A549 (cell line): ENCODE measurements at regions of chr11 and their contacts with region 1.

Region 1: GRCh38 chr11:848380-848931 is 5.8 kb downstream of the TSPAN4 start:
- DNase-seq: peak in 1 of 2 experiments; percentile 72
- ATAC-seq: peak in 1 of 2 experiments; percentile 9; a peak in 2 of 6 replicates
- H3K4me3 ChIP-seq: no peak overlapping the region
- H3K27ac ChIP-seq: peak overlapping the region; percentile 37 to 99; a peak in 3 of 6 replicates
- H3K4me1 ChIP-seq: peaks cover 67% of the 10 kb centered on the region
- CTCF ChIP-seq: peak; percentile 64
- EP300 ChIP-seq: no peak
- POLR2A ChIP-seq: no peak
- RAD21 ChIP-seq: peak; percentile 72 to 78

Region 2: GRCh38 chr11:709109-709997 is 139.1 kb before region 1 on chr11:
- CTCF ChIA-PET with region 1: no interaction called
- POLR2A ChIA-PET with region 1: no interaction called
- DNase-seq: no peak
- ATAC-seq: no peak
- H3K4me3 ChIP-seq: no peak overlapping the region
- H3K27ac ChIP-seq: peak overlapping the region; percentile 91 to 99; a peak in 5 of 6 replicates
- H3K4me1 ChIP-seq: peaks cover 73% of the 10 kb centered on the region
- CTCF ChIP-seq: no peak
- EP300 ChIP-seq: no peak
- POLR2A ChIP-seq: no peak
- RAD21 ChIP-seq: no peak

Region 3: DNA sequence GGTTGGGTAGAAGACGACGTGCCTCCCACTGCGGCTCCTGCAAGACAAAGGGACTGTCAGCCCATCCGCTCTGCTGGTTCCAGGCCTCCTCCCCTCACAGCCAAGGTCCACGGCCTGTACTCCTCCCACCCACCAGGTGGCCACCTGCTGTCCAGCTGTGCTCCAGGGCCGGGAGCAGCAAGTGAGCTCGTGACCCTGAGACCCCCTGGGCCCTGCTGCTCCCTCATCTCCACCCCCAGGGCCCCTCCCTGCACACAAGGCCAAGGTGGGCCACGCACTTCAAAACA is 21.6 kb after region 1 on chr11:
- CTCF ChIA-PET with region 1: interaction called, 18 read pairs
- POLR2A ChIA-PET with region 1: interaction called, 6 read pairs
- DNase-seq: no peak
- ATAC-seq: peak; percentile 35 to 48; a peak in 5 of 6 replicates
- H3K4me3 ChIP-seq: no peak overlapping the region
- H3K27ac ChIP-seq: no peak overlapping the region
- H3K4me1 ChIP-seq: peaks cover 24% of the 10 kb centered on the region; the same call in 2 of the 3 replicates
- CTCF ChIP-seq: no peak; the same call in 1 of the 3 replicates
- EP300 ChIP-seq: no peak
- POLR2A ChIP-seq: no peak
- RAD21 ChIP-seq: no peak

Region 4: GRCh38 chr11:933142-933851 is 84.8 kb after region 1 on chr11:
- CTCF ChIA-PET with region 1: no interaction called
- POLR2A ChIA-PET with region 1: no interaction called
- DNase-seq: no peak
- ATAC-seq: no peak; a peak in 1 of 6 replicates
- H3K4me3 ChIP-seq: no peak overlapping the region
- H3K27ac ChIP-seq: no peak overlapping the region
- H3K4me1 ChIP-seq: peaks cover 24% of the 10 kb centered on the region; the same call in 1 of the 3 replicates
- CTCF ChIP-seq: no peak
- EP300 ChIP-seq: no peak
- POLR2A ChIP-seq: no peak
- RAD21 ChIP-seq: no peak

Region 5: GRCh38 chr11:961921-962320 is 113.5 kb after region 1 on chr11:
- CTCF ChIA-PET with region 1: no interaction called
- POLR2A ChIA-PET with region 1: no interaction called
- DNase-seq: no peak
- ATAC-seq: no peak
- H3K4me3 ChIP-seq: no peak overlapping the region
- H3K27ac ChIP-seq: no peak overlapping the region
- H3K4me1 ChIP-seq: peaks cover 6% of the 10 kb centered on the region; the same call in 1 of the 3 replicates
- CTCF ChIP-seq: no peak
- EP300 ChIP-seq: no peak
- POLR2A ChIP-seq: no peak
- RAD21 ChIP-seq: no peak

Region 6: DNA sequence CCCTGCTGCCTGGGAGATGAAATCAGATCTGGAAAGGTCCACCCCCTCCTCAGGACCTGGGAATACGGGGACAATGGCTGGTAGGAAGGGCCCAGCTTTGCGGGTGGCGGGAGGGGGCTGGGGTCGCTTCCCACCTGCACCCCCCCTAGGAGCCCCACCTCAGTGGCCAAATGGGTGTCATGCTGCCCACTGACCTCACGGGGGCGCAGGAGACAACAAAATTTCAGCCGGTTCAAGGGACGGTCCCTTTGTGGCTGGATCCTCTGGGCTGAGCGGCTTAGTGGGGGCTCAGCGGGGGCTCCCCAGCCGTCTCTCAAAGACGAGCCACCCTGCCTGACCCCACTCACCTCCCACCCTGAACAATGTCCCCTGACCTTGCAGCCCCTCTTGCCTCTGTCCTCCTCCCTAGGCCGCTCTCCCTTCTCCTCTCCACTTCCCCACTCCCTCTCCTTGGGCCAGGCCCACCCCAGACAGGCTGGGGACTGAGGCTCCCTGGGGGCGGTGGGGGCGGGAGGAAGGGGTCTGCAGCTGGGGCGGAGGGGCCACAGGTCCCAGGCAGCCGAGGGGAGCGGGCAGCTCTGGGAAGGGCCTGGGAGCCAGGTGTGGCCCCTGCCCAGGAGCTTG is 1188.5 kb after region 1 on chr11:
- CTCF ChIA-PET with region 1: no interaction called
- POLR2A ChIA-PET with region 1: no interaction called
- DNase-seq: no peak
- ATAC-seq: peak; percentile 44 to 85; a peak in 3 of 6 replicates
- H3K4me3 ChIP-seq: no peak overlapping the region
- H3K27ac ChIP-seq: no peak overlapping the region
- H3K4me1 ChIP-seq: no peaks in the 10 kb centered on the region
- CTCF ChIP-seq: no peak
- EP300 ChIP-seq: no peak
- POLR2A ChIP-seq: no peak
- RAD21 ChIP-seq: no peak